IMR-90 (cell line): ENCODE measurements at regions of chr11 and their contacts with region 1.

Region 1: GRCh38 chr11:128532572-128533091 is 54.7 kb downstream of the ETS1 start:
- DNase-seq: no peak
- ATAC-seq: no peak
- H3K4me3 ChIP-seq: no peak overlapping the region
- H3K27ac ChIP-seq: no peak overlapping the region
- H3K4me1 ChIP-seq: peaks cover 8% of the 10 kb centered on the region
- H3K27me3 ChIP-seq: 0 out of 2 replicates have a peak, but pooled peaks cover 2% of the 10 kb centered on the region
- CTCF ChIP-seq: no peak
- POLR2A ChIP-seq: no peak
- RAD21 ChIP-seq: no peak

Region 2: GRCh38 chr11:128482512-128483191 is 50.0 kb before region 1 on chr11:
- CTCF ChIA-PET with region 1: no interaction called
- POLR2A ChIA-PET with region 1: no interaction called
- dilution Hi-C with region 1: no loop called
- in situ Hi-C with region 1: no loop called
- intact Hi-C with region 1: no loop called
- DNase-seq: peak; percentile 46
- ATAC-seq: no peak
- H3K4me3 ChIP-seq: no peak overlapping the region
- H3K27ac ChIP-seq: peak overlapping the region; percentile 14; the same call in 1 of the 2 replicates
- H3K4me1 ChIP-seq: peaks cover 21% of the 10 kb centered on the region
- H3K27me3 ChIP-seq: no peaks in the 10 kb centered on the region
- CTCF ChIP-seq: no peak
- POLR2A ChIP-seq: no peak
- RAD21 ChIP-seq: no peak

Region 3: DNA sequence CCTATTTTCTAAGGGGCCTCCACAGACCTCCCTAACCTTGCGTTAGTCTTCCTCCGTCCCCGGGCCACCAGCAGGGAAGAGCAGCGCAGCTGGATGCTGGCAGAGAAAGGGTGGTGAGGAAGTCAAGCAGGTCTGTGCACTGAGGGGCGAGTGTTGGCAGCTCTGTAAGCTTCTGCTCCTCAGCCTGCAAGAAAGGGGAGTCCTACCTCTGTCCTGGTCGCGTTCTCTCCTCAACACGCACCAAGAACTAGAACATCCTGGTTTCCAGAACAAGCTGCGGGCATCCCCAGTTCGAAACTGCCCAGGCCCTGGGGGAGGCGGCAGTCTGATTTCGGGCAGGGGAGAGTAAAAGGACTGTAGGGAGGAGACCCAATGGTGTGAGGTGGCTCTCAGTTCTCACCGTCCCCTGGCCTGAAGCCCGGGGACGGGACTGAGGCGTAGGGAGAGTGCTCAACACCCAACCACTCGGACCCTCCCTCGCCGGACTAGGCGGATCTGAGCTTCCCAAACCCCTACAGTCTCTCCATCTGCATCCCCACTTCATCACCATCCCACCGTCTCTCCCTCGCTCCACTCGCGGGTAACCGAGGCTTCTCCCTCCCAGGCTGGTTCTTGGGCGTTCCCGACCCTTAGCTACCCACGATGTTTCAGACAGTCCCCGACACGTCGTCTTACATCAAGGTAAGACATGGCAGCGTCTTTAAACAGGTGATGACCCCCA is 153.5 kb after region 1 on chr11:
- CTCF ChIA-PET with region 1: no interaction called
- POLR2A ChIA-PET with region 1: interaction called, 14 read pairs
- dilution Hi-C with region 1: no loop called
- in situ Hi-C with region 1: no loop called
- intact Hi-C with region 1: no loop called
- DNase-seq: no peak
- ATAC-seq: no peak
- H3K4me3 ChIP-seq: no peak overlapping the region
- H3K27ac ChIP-seq: no peak overlapping the region
- H3K4me1 ChIP-seq: peaks cover 2% of the 10 kb centered on the region
- H3K27me3 ChIP-seq: peaks cover 98% of the 10 kb centered on the region
- CTCF ChIP-seq: no peak
- POLR2A ChIP-seq: no peak
- RAD21 ChIP-seq: no peak